Heart left ventricle (tissue), 16 donors: ENCODE measurements at regions of chr20 and their contacts with region 1.

Region 1: DNA sequence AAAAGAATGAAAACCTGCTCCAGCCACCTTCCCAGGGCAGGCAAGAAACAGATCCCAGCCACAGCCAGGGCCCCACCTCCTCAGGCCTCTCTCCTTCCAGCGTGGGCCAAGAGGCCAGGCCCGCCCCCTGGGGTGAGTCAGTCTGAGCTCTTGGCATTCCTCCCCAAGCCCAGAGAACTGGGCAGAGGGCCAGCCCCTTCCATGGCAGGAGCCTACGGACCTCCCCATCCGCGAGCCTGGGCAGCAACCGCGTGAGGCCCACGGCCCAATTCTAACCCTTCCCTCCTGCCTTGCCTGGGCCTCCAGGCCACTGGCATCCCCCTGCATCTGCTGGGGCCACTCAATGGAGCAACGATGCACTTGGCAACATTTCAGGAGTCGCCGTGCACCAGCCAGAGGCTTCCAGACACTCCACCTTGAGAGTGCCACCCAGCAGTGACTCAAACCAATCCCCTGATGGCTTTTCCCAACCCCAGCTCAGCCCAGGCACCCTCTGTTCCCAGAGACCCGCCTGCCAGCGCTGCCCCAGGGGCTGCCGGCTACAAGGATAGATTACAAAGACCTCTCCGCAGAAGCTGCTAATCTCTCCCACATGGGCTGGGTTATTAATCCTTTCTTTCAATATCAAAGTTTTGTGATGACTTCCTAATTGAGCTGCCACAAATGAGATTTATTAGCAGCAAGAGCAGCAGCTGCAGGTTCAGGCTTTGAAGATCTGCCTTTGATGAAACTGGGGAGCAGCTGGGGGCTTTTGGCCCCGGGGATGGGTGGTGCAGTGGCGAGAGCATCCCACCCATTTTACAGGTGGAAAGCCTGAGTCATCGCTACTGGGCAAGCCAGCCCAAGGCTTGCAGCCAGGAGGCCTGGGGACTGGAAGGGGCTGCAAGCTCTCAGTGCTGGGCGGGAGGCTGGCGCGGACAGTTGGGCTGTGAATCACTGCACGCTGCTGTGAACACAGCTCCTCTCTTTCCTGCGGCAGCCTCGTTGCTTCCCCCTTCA is 85.7 kb downstream of the NFATC2 start:
- DNase-seq: peak; percentile 94 to 97 (median 96)
- ATAC-seq: peak; percentile 97 to 99 (median 98)
- H3K4me3 ChIP-seq: peak overlapping the region in 4 of 12 donors; percentile 3 to 19 (median 10)
- H3K27ac ChIP-seq: peak overlapping the region in 11 of 12 donors; percentile 12 to 82 (median 61)
- H3K4me1 ChIP-seq: peaks cover 2 to 18% (median 14%) of the 10 kb centered on the region in 12 donors
- H3K27me3 ChIP-seq: no peaks in the 10 kb centered on the region
- CTCF ChIP-seq: peak in 1 of 12 donors; percentile 15
- POLR2A ChIP-seq: no peak

Region 2: GRCh38 chr20:51393571-51393970 is 63.2 kb before region 1 on chr20:
- intact Hi-C with region 1: loop called in 1 of 10 experiments (anchors 5 kb)
- DNase-seq: peak in 3 of 5 donors; percentile 31 to 45 (median 36)
- ATAC-seq: peak in 3 of 4 donors; percentile 38 to 75 (median 63)
- H3K4me3 ChIP-seq: no peak overlapping the region
- H3K27ac ChIP-seq: peak overlapping the region in 11 of 12 donors; percentile 3 to 72 (median 46)
- H3K4me1 ChIP-seq: peaks cover 0 to 70% (median 40%) of the 10 kb centered on the region in 12 donors
- H3K27me3 ChIP-seq: no peaks in the 10 kb centered on the region
- CTCF ChIP-seq: no peak
- POLR2A ChIP-seq: no peak

Region 3: GRCh38 chr20:51500311-51500710 is 43.5 kb after region 1 on chr20:
- intact Hi-C with region 1: no loop called
- DNase-seq: no peak
- ATAC-seq: peak in 2 of 4 donors; percentile 21 to 43
- H3K4me3 ChIP-seq: no peak overlapping the region
- H3K27ac ChIP-seq: peak overlapping the region in 1 of 12 donors; percentile 0
- H3K4me1 ChIP-seq: peaks cover 0 to 52% (median 13%) of the 10 kb centered on the region in 12 donors
- H3K27me3 ChIP-seq: no peaks in the 10 kb centered on the region
- CTCF ChIP-seq: no peak
- POLR2A ChIP-seq: no peak

Region 4: GRCh38 chr20:51531141-51531710 is 74.4 kb after region 1 on chr20:
- intact Hi-C with region 1: loop called in 2 of 10 experiments (anchors 5 to 10 kb)
- DNase-seq: no peak
- ATAC-seq: no peak
- H3K4me3 ChIP-seq: no peak overlapping the region
- H3K27ac ChIP-seq: peak overlapping the region in 4 of 12 donors; percentile 13 to 87 (median 56)
- H3K4me1 ChIP-seq: peaks cover 0 to 88% (median 34%) of the 10 kb centered on the region in 12 donors
- H3K27me3 ChIP-seq: no peaks in the 10 kb centered on the region
- CTCF ChIP-seq: no peak
- POLR2A ChIP-seq: no peak

Region 5: DNA sequence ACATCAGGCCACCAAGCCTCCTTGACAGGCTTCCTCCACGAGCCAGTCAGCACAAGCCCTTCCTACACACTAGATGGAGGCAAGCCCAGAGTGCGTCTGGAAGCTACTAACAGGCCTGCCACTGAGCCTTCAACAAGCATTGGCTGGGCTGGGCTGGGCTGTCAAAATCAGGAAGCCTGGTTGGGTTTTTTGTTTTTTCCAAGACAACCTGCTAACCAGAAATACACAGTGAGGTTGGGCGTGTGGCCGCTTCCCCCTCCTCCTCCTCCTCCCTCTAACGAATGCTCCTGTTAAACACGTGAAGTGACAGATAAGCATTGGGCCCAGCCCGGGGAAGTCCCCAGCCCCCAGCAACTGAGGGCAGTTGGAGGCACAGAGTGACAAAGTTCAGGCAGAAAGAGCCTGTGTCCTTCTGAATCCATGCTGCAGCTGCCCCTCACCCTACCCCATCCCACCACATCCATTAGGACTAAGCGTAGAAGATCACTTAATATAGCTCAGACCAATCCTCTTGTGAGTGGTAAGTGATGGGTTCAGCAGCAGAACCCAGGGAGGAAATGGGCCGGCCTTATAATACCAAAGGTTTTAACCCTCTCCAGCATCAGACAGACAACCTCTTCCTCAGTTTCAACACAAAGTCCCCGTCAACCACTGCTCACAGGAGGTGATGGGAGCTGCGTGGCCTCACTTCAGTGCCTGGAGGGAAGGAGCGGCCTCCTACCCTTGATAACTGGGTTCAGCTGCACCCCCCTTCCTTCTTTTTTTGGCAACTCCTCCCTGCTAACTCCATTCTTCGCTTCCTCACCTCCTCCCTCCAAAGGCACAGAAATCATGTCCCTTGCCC is 84.6 kb after region 1 on chr20:
- intact Hi-C with region 1: loop called in 4 of 10 experiments (anchors 10 kb)
- DNase-seq: peak; percentile 82 to 92 (median 87)
- ATAC-seq: peak; percentile 92 to 95 (median 92)
- H3K4me3 ChIP-seq: peak overlapping the region in 10 of 12 donors; percentile 35 to 69 (median 54)
- H3K27ac ChIP-seq: peak overlapping the region; percentile 57 to 89 (median 78)
- H3K4me1 ChIP-seq: peaks cover 4 to 44% (median 34%) of the 10 kb centered on the region in 12 donors
- H3K27me3 ChIP-seq: peaks cover 0 to 10% (median 0%) of the 10 kb centered on the region in 9 donors
- CTCF ChIP-seq: peak in 1 of 12 donors; percentile 30
- POLR2A ChIP-seq: no peak

Region 6: GRCh38 chr20:51650685-51651134 is 193.9 kb after region 1 on chr20:
- intact Hi-C with region 1: no loop called
- DNase-seq: no peak
- ATAC-seq: peak in 1 of 4 donors; percentile 52
- H3K4me3 ChIP-seq: no peak overlapping the region
- H3K27ac ChIP-seq: peak overlapping the region in 1 of 12 donors; percentile 61
- H3K4me1 ChIP-seq: peaks cover 0 to 25% (median 0%) of the 10 kb centered on the region in 12 donors
- H3K27me3 ChIP-seq: no peaks in the 10 kb centered on the region
- CTCF ChIP-seq: no peak
- POLR2A ChIP-seq: no peak

Region 7: GRCh38 chr20:51725380-51726203 is 268.8 kb after region 1 on chr20:
- intact Hi-C with region 1: no loop called
- DNase-seq: no peak
- ATAC-seq: no peak
- H3K4me3 ChIP-seq: no peak overlapping the region
- H3K27ac ChIP-seq: no peak overlapping the region
- H3K4me1 ChIP-seq: no peaks in the 10 kb centered on the region
- H3K27me3 ChIP-seq: no peaks in the 10 kb centered on the region
- CTCF ChIP-seq: no peak
- POLR2A ChIP-seq: no peak